Activated CD4-positive, alpha-beta memory T cell treated with anti-CD3 and anti-CD28 coated beads for 36 hours (primary cell): ENCODE measurements at regions of chr1 and their contacts with region 1.

Region 1: GRCh38 chr1:214427871-214428277 is 123.5 kb downstream of the PTPN14 start:
- DNase-seq: peak; percentile 89
- H3K4me3 Mint-ChIP-seq: peak overlapping the region; percentile 42
- H3K27ac Mint-ChIP-seq: peak overlapping the region; percentile 92
- H3K4me1 Mint-ChIP-seq: peaks cover 22% of the 10 kb centered on the region
- H3K27me3 Mint-ChIP-seq: no peaks in the 10 kb centered on the region

Region 2: GRCh38 chr1:214123061-214123784 is 304.7 kb before region 1 on chr1:
- CTCF ChIA-PET with region 1: no interaction called
- POLR2A ChIA-PET with region 1: no interaction called
- intact Hi-C with region 1: no loop called
- DNase-seq: peak; percentile 15
- H3K4me3 Mint-ChIP-seq: no peak overlapping the region
- H3K27ac Mint-ChIP-seq: no peak overlapping the region
- H3K4me1 Mint-ChIP-seq: no peaks in the 10 kb centered on the region
- H3K27me3 Mint-ChIP-seq: peaks cover 3% of the 10 kb centered on the region

Region 3: GRCh38 chr1:214349781-214350180 is 78.1 kb before region 1 on chr1:
- CTCF ChIA-PET with region 1: no interaction called
- POLR2A ChIA-PET with region 1: no interaction called
- intact Hi-C with region 1: no loop called
- DNase-seq: no peak
- H3K4me3 Mint-ChIP-seq: no peak overlapping the region
- H3K27ac Mint-ChIP-seq: no peak overlapping the region
- H3K4me1 Mint-ChIP-seq: no peaks in the 10 kb centered on the region
- H3K27me3 Mint-ChIP-seq: no peaks in the 10 kb centered on the region

Region 4: DNA sequence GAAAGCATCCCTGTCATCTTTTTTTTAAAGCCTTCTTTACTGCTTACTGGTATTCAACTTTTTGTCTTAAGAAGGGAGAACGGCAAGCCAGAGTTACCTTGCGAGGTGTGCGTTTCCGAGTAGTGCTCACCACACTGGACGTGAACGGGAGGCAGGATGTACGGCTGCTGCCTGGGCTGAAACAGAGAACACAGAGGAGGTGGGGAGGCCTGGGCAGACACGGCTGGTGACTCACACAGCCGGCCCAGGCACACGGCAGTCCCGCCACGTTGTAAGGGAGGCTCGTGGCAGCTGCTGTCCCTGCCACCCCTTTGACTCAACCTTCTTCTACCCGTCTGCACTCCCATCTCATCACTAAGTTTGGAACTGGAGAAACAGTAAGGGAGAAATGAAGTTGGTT is 41.1 kb before region 1 on chr1:
- CTCF ChIA-PET with region 1: no interaction called
- POLR2A ChIA-PET with region 1: no interaction called
- intact Hi-C with region 1: loop called (anchors 5 kb)
- DNase-seq: peak; percentile 15
- H3K4me3 Mint-ChIP-seq: no peak overlapping the region
- H3K27ac Mint-ChIP-seq: no peak overlapping the region
- H3K4me1 Mint-ChIP-seq: peaks cover 2% of the 10 kb centered on the region
- H3K27me3 Mint-ChIP-seq: no peaks in the 10 kb centered on the region

Region 5: GRCh38 chr1:214404154-214404553 is 23.7 kb before region 1 on chr1:
- CTCF ChIA-PET with region 1: interaction called, 4 read pairs
- POLR2A ChIA-PET with region 1: interaction called, 4 read pairs
- intact Hi-C with region 1: loop called (anchors 1 kb)
- DNase-seq: no peak
- H3K4me3 Mint-ChIP-seq: no peak overlapping the region
- H3K27ac Mint-ChIP-seq: peak overlapping the region; percentile 29
- H3K4me1 Mint-ChIP-seq: peaks cover 20% of the 10 kb centered on the region
- H3K27me3 Mint-ChIP-seq: no peaks in the 10 kb centered on the region

Region 6: GRCh38 chr1:214446772-214447556 is 19.1 kb after region 1 on chr1:
- CTCF ChIA-PET with region 1: no interaction called
- POLR2A ChIA-PET with region 1: no interaction called
- intact Hi-C with region 1: loop called (anchors 2 kb)
- DNase-seq: no peak
- H3K4me3 Mint-ChIP-seq: no peak overlapping the region
- H3K27ac Mint-ChIP-seq: no peak overlapping the region
- H3K4me1 Mint-ChIP-seq: peaks cover 18% of the 10 kb centered on the region
- H3K27me3 Mint-ChIP-seq: peaks cover 2% of the 10 kb centered on the region